Activated CD4-positive, alpha-beta T cell treated with anti-CD3 and anti-CD28 coated beads, Interleukin-2, amount 10 ng/mL, durations not matched to agents 7 days and 5 days (primary cell): ENCODE measurements at regions of chr3 and their contacts with region 1.

Region 1: GRCh38 chr3:12741209-12741608 is 17.9 kb downstream of the TMEM40 start:
- DNase-seq: no peak
- H3K4me3 Mint-ChIP-seq: no peak overlapping the region
- H3K27ac Mint-ChIP-seq: no peak overlapping the region
- H3K4me1 Mint-ChIP-seq: no peaks in the 10 kb centered on the region
- H3K27me3 Mint-ChIP-seq: peaks cover 17% of the 10 kb centered on the region

Region 2: DNA sequence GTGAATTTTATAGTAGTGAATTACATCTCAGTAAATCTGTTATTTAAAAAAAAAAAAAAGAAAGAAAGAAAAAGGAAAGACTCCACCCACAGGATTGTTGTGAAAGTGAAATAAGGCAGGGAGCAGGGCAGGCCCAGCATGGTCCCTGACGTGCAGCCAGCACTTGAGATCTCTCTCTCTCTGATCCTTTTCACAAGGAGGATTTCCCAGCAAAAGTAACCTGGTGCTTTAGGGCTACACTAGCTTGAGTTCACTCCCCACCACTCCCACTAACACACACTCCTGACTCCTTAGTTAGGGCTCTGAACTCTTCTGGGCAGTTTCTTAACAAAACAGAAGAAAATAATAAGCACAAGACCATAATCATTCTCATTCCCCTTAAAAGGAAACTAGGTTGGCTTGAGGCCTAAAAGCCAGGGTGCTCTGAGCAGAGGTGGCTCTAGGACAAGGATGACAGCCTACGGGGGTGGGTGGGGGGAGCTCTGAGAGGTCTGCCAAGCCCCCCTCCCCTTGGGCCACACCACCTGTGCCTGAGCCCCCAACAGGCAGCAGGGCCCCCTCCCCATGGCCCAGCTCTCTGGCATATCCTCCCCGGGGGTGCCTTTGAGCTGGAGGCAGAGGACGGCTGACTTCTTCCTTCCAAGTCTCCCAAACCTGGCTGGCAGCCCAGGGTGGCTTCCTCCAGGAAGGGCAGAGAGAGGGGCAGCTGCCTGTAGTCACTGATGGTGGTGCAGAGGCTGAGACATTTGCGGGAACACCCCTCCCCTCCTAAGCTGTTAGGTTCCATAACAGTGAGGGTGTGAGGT is 17.0 kb after region 1 on chr3:
- CTCF ChIA-PET with region 1: interaction called, 7 read pairs
- POLR2A ChIA-PET with region 1: interaction called, 10 read pairs
- DNase-seq: no peak
- H3K4me3 Mint-ChIP-seq: no peak overlapping the region
- H3K27ac Mint-ChIP-seq: no peak overlapping the region
- H3K4me1 Mint-ChIP-seq: peaks cover 7% of the 10 kb centered on the region
- H3K27me3 Mint-ChIP-seq: peaks cover 3% of the 10 kb centered on the region

Region 3: DNA sequence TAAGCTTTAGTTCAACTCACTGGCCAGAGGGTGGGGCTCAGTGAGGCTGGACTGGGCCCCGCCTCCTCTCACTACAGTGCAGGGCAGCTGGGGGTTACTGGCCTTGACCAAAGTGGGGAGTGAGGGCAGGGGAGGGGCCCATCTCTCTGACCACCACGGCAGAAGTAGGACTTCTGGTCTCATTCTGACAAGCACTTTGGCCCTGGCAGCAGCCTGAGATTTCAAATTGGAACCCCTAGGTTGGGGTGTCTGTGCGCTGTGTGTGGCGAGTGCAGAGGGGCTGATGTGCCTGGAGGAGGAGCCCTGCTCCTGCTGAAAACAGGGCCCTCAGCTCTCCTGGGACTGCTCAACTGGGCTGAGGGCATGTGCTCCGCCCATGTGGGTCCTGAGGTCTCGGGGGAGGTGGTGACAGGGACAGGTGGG is 160.4 kb after region 1 on chr3:
- CTCF ChIA-PET with region 1: no interaction called
- POLR2A ChIA-PET with region 1: no interaction called
- DNase-seq: no peak
- H3K4me3 Mint-ChIP-seq: no peak overlapping the region
- H3K27ac Mint-ChIP-seq: no peak overlapping the region
- H3K4me1 Mint-ChIP-seq: peaks cover 13% of the 10 kb centered on the region
- H3K27me3 Mint-ChIP-seq: no peaks in the 10 kb centered on the region